Dorsolateral prefrontal cortex (tissue), 120 donors: ENCODE measurements at regions of chr3 and their contacts with region 1.

Region 1: DNA sequence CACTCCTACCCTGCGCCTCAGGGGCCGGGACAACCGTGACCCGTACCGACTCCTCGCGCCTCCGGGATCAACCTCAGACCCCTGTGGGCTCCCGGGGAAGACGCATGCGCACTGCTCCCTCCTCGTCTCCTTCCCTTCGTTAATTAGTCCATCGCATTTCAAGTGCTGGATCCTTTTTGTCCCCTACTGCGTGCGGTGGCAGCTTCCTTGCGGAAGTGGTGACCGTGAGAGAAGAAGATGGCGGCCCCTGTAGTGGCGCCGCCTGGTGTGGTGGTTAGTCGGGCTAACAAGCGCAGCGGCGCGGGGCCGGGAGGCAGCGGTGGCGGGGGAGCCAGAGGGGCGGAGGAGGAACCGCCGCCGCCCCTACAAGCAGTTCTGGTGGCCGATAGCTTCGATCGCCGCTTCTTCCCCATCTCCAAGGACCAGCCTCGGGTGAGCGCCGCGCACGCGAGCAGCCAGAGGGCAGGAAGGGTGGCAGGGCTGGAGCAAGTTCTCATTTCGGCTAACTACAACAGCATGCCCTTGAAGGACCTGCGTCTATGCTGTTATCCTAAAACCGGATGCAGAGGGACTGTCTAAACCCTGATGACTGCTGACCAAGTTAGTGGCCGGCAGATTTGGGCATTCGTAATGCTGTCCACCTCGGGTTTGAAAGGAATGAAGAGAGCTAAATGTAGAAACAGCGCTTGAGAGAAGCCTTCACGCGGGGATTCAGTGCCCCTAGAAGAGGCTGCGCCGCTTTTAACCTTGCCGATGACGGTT is at the start of gene EIF2B5:
- DNase-seq: peak; percentile 89 to 97 (median 94)
- H3K4me3 ChIP-seq: peak within 1 kb of the TSS; percentile 66 to 99 (median 94)
- H3K27ac ChIP-seq: peak within 1 kb of the TSS; percentile 79 to 99 (median 95)
- H3K27me3 ChIP-seq: no peaks in the 10 kb centered on the region
- CTCF ChIP-seq: peak; percentile 55 to 90 (median 76)
- total RNA-seq, gene EIF2B5: 35.0 to 63.0 (median 44.9) TPM

Region 2: GRCh38 chr3:183895296-183895695 is 240.0 kb before region 1 on chr3:
- intact Hi-C with region 1: loop called in 1 of 2 experiments (anchors 5 kb)
- DNase-seq: peak in 1 of 10 donors; percentile 24
- H3K4me3 ChIP-seq: peak overlapping the region in 1 of 59 donors; percentile 29
- H3K27ac ChIP-seq: no peak overlapping the region
- H3K27me3 ChIP-seq: no peaks in the 10 kb centered on the region
- CTCF ChIP-seq: peak; percentile 62 to 93 (median 82)

Region 3: DNA sequence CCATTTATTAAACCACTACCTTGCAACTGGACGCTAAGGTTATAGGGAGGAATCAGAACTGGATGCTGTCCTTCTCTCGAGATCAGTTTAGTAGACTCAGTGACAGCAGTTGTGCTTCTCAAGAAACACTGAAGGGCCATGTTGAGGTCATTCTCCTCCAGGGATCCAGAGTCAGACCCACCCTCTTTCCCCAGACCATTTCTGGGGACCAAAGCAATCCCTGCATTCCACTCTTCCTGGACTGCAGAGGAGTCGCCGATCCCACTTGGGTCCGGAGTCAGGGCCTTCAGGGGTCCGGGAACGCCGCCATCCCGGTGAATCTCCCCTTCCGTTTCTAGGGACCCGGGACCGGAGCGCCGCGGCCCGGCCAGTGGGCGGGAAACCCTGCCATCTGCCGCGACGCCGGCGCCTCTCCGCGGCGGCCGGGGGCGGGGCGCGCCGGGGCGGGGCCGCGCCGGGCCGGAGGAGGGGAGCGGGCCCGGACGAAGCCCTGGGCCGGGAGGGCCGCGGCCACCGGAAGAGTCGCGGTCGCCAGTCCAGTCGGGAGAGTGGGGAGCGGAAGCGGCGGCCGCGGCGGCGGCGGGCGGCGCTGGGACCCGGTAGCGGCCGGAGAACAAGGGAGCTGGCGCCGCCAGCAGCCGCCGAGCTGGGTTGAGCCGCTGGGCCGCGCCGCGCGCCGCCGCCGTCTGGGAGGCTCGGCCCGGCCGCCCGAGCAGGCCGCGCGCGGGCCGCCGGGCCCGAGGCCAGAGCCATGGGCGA is 19.7 kb after region 1 on chr3 and contains the start of gene DVL3:
- intact Hi-C with region 1: loop called (anchors 1 kb)
- DNase-seq: peak in 9 of 10 donors; percentile 46 to 82 (median 57)
- H3K4me3 ChIP-seq: peak within 1 kb of the TSS; percentile 72 to 97 (median 91)
- H3K27ac ChIP-seq: peak within 1 kb of the TSS; percentile 78 to 98 (median 95)
- H3K27me3 ChIP-seq: no peaks in the 10 kb centered on the region
- CTCF ChIP-seq: peak in 3 of 56 donors; percentile 19 to 31 (median 21)
- total RNA-seq, gene DVL3: 48.6 to 82.7 (median 65.1) TPM

Region 4: DNA sequence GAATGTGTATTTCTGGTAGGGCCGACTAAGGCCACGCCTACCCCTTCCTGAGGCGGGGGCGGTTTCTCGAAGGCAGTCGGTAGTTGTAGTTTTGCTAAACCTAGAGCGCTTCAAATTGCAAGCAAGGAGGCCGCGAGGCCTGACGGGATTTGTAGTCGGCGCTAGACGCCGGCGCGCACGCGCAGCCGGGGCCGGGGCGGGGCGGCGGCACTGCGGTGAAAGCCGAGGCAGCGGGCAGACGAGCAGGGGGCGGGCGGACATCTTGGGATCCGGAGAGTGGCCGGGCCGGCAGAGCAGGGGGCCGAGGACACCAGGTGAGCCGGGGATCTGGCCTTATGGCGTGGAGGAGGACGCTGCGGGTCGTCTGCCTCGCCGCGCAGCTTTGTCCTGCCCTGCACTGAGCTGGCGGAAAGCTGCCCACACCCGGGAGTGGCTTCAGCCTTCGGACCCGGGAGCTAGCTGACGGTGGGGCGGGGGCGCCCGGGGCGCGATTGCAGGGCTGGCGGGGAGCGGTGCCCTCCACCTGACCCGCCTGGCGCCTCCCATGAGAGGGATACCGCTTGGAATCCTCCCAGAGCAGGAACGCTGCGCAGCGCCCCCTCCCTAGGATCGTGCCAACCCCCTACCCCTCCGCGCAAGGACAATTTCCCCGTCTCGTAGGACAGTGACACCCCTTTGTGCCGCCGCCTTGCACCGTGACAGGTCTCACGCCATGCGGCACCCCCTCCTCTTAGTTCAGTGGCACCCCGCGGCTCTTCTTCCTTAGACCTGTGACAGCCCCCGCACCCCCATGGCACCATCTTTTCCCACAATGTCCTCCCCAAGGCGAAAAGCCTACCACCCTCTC is 39.5 kb after region 1 on chr3 and contains the start of gene AP2M1:
- intact Hi-C with region 1: loop called in 1 of 2 experiments (anchors 5 kb)
- DNase-seq: peak; percentile 96 to 100 (median 99)
- H3K4me3 ChIP-seq: peak within 1 kb of the TSS; percentile 75 to 100 (median 99)
- H3K27ac ChIP-seq: peak within 1 kb of the TSS; percentile 61 to 99 (median 95)
- H3K27me3 ChIP-seq: no peaks in the 10 kb centered on the region
- CTCF ChIP-seq: peak in 23 of 56 donors; percentile 2 to 51 (median 18)
- total RNA-seq, gene AP2M1: 297 to 743 (median 543) TPM

Region 5: DNA sequence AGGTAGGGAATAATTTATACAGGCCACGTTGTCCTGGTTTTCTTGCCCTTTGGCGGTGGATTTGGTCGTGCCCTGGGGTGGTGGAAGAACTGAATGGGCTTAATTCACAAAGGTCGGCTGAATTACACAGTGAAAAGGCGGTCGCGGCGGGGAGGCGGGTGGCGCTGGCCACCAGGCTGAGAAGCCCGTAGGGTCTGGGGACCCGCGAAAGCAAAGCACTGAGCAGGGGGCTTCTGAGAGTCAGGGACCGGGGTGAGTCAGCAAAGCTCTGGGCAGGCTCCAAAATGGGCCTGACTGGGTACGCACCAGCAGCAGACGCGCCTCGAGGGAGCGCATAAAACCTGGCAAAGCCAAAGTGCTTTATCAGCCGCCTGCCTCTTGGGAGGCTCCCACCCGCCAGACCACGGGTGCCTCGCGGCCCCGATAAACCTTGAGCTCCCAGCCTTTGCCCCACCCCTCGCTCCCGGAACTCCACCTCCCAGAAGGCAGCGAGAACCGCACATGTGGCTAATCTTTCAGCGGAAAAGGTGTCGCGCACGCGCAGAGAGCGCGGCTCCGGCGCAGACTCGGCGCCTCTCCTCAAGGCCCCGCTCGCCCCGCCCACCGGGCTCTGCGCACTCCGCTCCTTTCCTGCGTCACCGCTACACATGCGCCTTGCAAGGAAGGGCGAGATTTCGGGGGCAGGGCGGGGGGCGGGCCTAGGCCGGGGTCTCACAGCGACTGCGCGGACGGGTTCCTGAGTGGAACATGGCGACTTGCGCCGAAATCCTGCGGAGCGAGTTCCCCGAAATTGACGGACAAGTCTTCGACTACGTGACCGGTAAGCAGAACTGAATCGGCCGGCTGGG is 50.4 kb after region 1 on chr3 and contains the start of gene ABCF3:
- intact Hi-C with region 1: loop called (anchors 2 to 5 kb)
- DNase-seq: peak; percentile 97 to 99 (median 98)
- H3K4me3 ChIP-seq: peak within 1 kb of the TSS; percentile 62 to 100 (median 96)
- H3K27ac ChIP-seq: peak within 1 kb of the TSS; percentile 54 to 96 (median 89)
- H3K27me3 ChIP-seq: no peaks in the 10 kb centered on the region
- CTCF ChIP-seq: peak in 23 of 56 donors; percentile 3 to 46 (median 23)
- total RNA-seq, gene ABCF3: 72.1 to 140 (median 98.1) TPM

Region 6: DNA sequence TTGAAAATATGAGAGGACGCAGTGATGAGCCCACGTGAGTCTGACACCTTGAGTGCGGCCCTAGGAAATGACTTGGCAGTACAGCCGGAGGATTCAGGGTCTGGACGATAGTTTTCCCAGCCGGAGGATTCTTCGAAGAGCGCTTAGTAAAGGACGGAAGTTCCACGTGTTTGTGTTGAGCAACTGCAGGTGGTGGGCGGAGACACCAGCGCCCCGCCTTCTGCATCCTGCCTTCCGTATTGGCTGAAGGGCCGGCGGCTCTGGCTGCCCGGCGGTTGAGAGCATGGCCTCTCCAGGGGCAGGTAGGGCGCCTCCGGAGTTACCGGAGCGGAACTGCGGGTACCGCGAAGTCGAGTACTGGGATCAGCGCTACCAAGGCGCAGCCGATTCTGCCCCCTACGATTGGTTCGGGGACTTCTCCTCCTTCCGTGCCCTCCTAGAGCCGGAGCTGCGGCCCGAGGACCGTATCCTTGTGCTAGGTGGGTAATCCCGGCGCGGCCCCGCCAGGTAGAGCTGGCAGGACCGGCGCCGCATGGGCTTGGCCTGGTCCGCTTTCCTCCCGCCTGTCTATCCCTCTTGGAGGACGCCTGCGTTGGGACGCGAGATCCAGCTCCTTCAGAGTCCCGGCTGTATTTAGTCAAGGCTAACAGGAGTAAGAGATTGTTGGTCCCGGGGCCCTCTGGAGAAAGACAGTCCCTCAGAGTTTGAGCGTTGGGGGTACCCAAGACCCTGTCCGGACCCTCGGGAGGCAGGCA is 114.3 kb after region 1 on chr3 and contains the start of gene EEF1AKMT4:
- intact Hi-C with region 1: loop called in 1 of 2 experiments (anchors 10 kb)
- DNase-seq: peak; percentile 87 to 97 (median 95)
- H3K4me3 ChIP-seq: peak within 1 kb of the TSS; percentile 54 to 100 (median 85)
- H3K27ac ChIP-seq: peak within 1 kb of the TSS; percentile 48 to 94 (median 87)
- H3K27me3 ChIP-seq: no peaks in the 10 kb centered on the region
- CTCF ChIP-seq: peak in 51 of 56 donors; percentile 25 to 71 (median 49)
- total RNA-seq, gene EEF1AKMT4: 0.25 to 1.6 (median 0.52) TPM in 80 of 120 experiments, not detected in the others